ENCODE measurements at regions of chr9 and their contacts with region 1.

Region 1: GRCh38 chr9:35116898-35117551 is 1.4 kb upstream of the ATOSB start:
- DNase-seq: peak; percentile 93 to 95
- ATAC-seq: peak; percentile 91
- H3K4me3 ChIP-seq: no peak overlapping the region
- H3K27ac ChIP-seq: peak overlapping the region; percentile 33 to 75
- H3K4me1 ChIP-seq: no peaks in the 10 kb centered on the region
- H3K27me3 ChIP-seq: no peaks in the 10 kb centered on the region

Region 2: GRCh38 chr9:35161713-35162604 is 44.9 kb after region 1 on chr9 and contains the start of gene UNC13B:
- intact Hi-C with region 1: loop called (anchors 5 kb)
- DNase-seq: peak; percentile 95 to 98
- ATAC-seq: peak; percentile 99
- H3K4me3 ChIP-seq: peak within 1 kb of the TSS; percentile 52 to 74
- H3K27ac ChIP-seq: peak within 1 kb of the TSS; percentile 16 to 57
- H3K4me1 ChIP-seq: no peaks in the 10 kb centered on the region
- H3K27me3 ChIP-seq: no peaks in the 10 kb centered on the region
- total RNA-seq, gene UNC13B: 30.6 to 33.7 TPM

Region 3: GRCh38 chr9:35193762-35194161 is 76.7 kb after region 1 on chr9:
- intact Hi-C with region 1: no loop called
- DNase-seq: no peak
- ATAC-seq: no peak
- H3K4me3 ChIP-seq: no peak overlapping the region
- H3K27ac ChIP-seq: no peak overlapping the region
- H3K4me1 ChIP-seq: peaks cover 0 to 2% of the 10 kb centered on the region in 2 donors
- H3K27me3 ChIP-seq: no peaks in the 10 kb centered on the region

Region 4: GRCh38 chr9:35258676-35259474 is 141.8 kb after region 1 on chr9:
- intact Hi-C with region 1: loop called (anchors 2 to 5 kb)
- DNase-seq: peak; percentile 77 to 79
- ATAC-seq: peak; percentile 73
- H3K4me3 ChIP-seq: no peak overlapping the region
- H3K27ac ChIP-seq: no peak overlapping the region
- H3K4me1 ChIP-seq: no peaks in the 10 kb centered on the region
- H3K27me3 ChIP-seq: no peaks in the 10 kb centered on the region

Region 5: GRCh38 chr9:35313916-35314315 is 196.9 kb after region 1 on chr9:
- intact Hi-C with region 1: loop called in 1 of 2 experiments (anchors 5 kb)
- DNase-seq: no peak
- ATAC-seq: no peak
- H3K4me3 ChIP-seq: no peak overlapping the region
- H3K27ac ChIP-seq: peak overlapping the region; percentile 25 to 28
- H3K4me1 ChIP-seq: peaks cover 2 to 8% of the 10 kb centered on the region in 2 donors
- H3K27me3 ChIP-seq: no peaks in the 10 kb centered on the region

Region 6: GRCh38 chr9:35385042-35385441 is 268.0 kb after region 1 on chr9:
- intact Hi-C with region 1: loop called (anchors 2 to 5 kb)
- DNase-seq: no peak
- ATAC-seq: peak; percentile 73
- H3K4me3 ChIP-seq: no peak overlapping the region
- H3K27ac ChIP-seq: no peak overlapping the region
- H3K4me1 ChIP-seq: no peaks in the 10 kb centered on the region
- H3K27me3 ChIP-seq: no peaks in the 10 kb centered on the region

Region 7: GRCh38 chr9:35481347-35481975 is 364.4 kb after region 1 on chr9:
- intact Hi-C with region 1: loop called (anchors 1 to 2 kb)
- DNase-seq: peak in 1 of 2 donors; percentile 63
- ATAC-seq: peak; percentile 73
- H3K4me3 ChIP-seq: no peak overlapping the region
- H3K27ac ChIP-seq: peak overlapping the region in 1 of 2 donors; percentile 18
- H3K4me1 ChIP-seq: no peaks in the 10 kb centered on the region
- H3K27me3 ChIP-seq: no peaks in the 10 kb centered on the region